Activated CD4-positive, alpha-beta T cell treated with anti-CD3 and anti-CD28 coated beads for 36 hours (primary cell): ENCODE measurements at regions of chr18 and their contacts with region 1.

Region 1: GRCh38 chr18:50356036-50356945 is 18.6 kb upstream of the SKA1 start:
- DNase-seq: peak; percentile 30
- ATAC-seq: peak; percentile 77
- H3K4me3 Mint-ChIP-seq: no peak overlapping the region
- H3K27ac Mint-ChIP-seq: peak overlapping the region; percentile 48
- H3K4me1 Mint-ChIP-seq: peaks cover 8% of the 10 kb centered on the region
- H3K27me3 Mint-ChIP-seq: peaks cover 14% of the 10 kb centered on the region

Region 2: GRCh38 chr18:49510393-49511115 is 845.7 kb before region 1 on chr18:
- CTCF ChIA-PET with region 1: interaction called, 5 read pairs
- POLR2A ChIA-PET with region 1: no interaction called
- intact Hi-C with region 1: loop called in 1 of 2 experiments (anchors 1 kb)
- DNase-seq: peak; percentile 70
- ATAC-seq: peak; percentile 61
- H3K4me3 Mint-ChIP-seq: no peak overlapping the region
- H3K27ac Mint-ChIP-seq: no peak overlapping the region
- H3K4me1 Mint-ChIP-seq: no peaks in the 10 kb centered on the region
- H3K27me3 Mint-ChIP-seq: peaks cover 10% of the 10 kb centered on the region

Region 3: GRCh38 chr18:50194631-50195532 is 161.4 kb before region 1 on chr18 and contains the start of gene MYO5B:
- CTCF ChIA-PET with region 1: interaction called, 15 read pairs
- POLR2A ChIA-PET with region 1: no interaction called
- intact Hi-C with region 1: loop called (anchors 5 kb)
- DNase-seq: peak; percentile 81
- ATAC-seq: peak; percentile 79
- H3K4me3 Mint-ChIP-seq: peak within 1 kb of the TSS; percentile 42
- H3K27ac Mint-ChIP-seq: no peak within 1 kb of the TSS
- H3K4me1 Mint-ChIP-seq: peaks cover 12% of the 10 kb centered on the region
- H3K27me3 Mint-ChIP-seq: peaks cover 60% of the 10 kb centered on the region
- total RNA-seq, gene MYO5B: 0.18 to 0.23 TPM

Region 4: GRCh38 chr18:50218432-50219197 is 137.7 kb before region 1 on chr18:
- CTCF ChIA-PET with region 1: interaction called, 72 read pairs
- POLR2A ChIA-PET with region 1: no interaction called
- intact Hi-C with region 1: loop called in 1 of 2 experiments (anchors 1 kb)
- DNase-seq: peak; percentile 57
- ATAC-seq: peak; percentile 55
- H3K4me3 Mint-ChIP-seq: no peak overlapping the region
- H3K27ac Mint-ChIP-seq: no peak overlapping the region
- H3K4me1 Mint-ChIP-seq: no peaks in the 10 kb centered on the region
- H3K27me3 Mint-ChIP-seq: peaks cover 19% of the 10 kb centered on the region

Region 5: GRCh38 chr18:50281295-50281971 is 74.9 kb before region 1 on chr18 and contains the start of gene MBD1:
- CTCF ChIA-PET with region 1: interaction called, 7 read pairs
- POLR2A ChIA-PET with region 1: no interaction called
- intact Hi-C with region 1: loop called (anchors 1 to 5 kb)
- DNase-seq: peak; percentile 97
- ATAC-seq: peak; percentile 91
- H3K4me3 Mint-ChIP-seq: peak within 1 kb of the TSS; percentile 91
- H3K27ac Mint-ChIP-seq: peak within 1 kb of the TSS; percentile 79
- H3K4me1 Mint-ChIP-seq: peaks cover 35% of the 10 kb centered on the region
- H3K27me3 Mint-ChIP-seq: no peaks in the 10 kb centered on the region
- total RNA-seq, gene MBD1: 62.2 to 70.5 TPM

Region 6: GRCh38 chr18:50374753-50375391 is 18.6 kb after region 1 on chr18 and contains the start of gene SKA1:
- CTCF ChIA-PET with region 1: interaction called, 16 read pairs
- POLR2A ChIA-PET with region 1: no interaction called
- intact Hi-C with region 1: no loop called
- DNase-seq: peak; percentile 96
- ATAC-seq: peak; percentile 99
- H3K4me3 Mint-ChIP-seq: peak within 1 kb of the TSS; percentile 83
- H3K27ac Mint-ChIP-seq: peak within 1 kb of the TSS; percentile 79
- H3K4me1 Mint-ChIP-seq: peaks cover 2% of the 10 kb centered on the region
- H3K27me3 Mint-ChIP-seq: peaks cover under 1% of the 10 kb centered on the region
- total RNA-seq, gene SKA1: 38.6 to 48.3 TPM